Gastrocnemius medialis (tissue), 4 donors: ENCODE measurements at regions of chr11 and their contacts with region 1.

Region 1: GRCh38 chr11:77421041-77421723 is 52.7 kb downstream of the PAK1 start:
- DNase-seq: no peak
- ATAC-seq: no peak
- H3K4me3 ChIP-seq: no peak overlapping the region
- H3K27ac ChIP-seq: no peak overlapping the region
- H3K4me1 ChIP-seq: peaks cover 14 to 21% of the 10 kb centered on the region in 2 donors
- H3K27me3 ChIP-seq: no peaks in the 10 kb centered on the region
- CTCF ChIP-seq: no peak
- POLR2A ChIP-seq: no peak

Region 2: GRCh38 chr11:77435972-77436371 is 14.8 kb after region 1 on chr11:
- in situ Hi-C with region 1: no loop called
- intact Hi-C with region 1: loop called (anchors 1 kb)
- DNase-seq: no peak
- ATAC-seq: no peak
- H3K4me3 ChIP-seq: no peak overlapping the region
- H3K27ac ChIP-seq: no peak overlapping the region
- H3K4me1 ChIP-seq: peaks cover 0 to 12% of the 10 kb centered on the region in 2 donors
- H3K27me3 ChIP-seq: no peaks in the 10 kb centered on the region
- CTCF ChIP-seq: no peak
- POLR2A ChIP-seq: no peak